ENCODE measurements at regions of chr1 and their contacts with region 1.

Region 1: DNA sequence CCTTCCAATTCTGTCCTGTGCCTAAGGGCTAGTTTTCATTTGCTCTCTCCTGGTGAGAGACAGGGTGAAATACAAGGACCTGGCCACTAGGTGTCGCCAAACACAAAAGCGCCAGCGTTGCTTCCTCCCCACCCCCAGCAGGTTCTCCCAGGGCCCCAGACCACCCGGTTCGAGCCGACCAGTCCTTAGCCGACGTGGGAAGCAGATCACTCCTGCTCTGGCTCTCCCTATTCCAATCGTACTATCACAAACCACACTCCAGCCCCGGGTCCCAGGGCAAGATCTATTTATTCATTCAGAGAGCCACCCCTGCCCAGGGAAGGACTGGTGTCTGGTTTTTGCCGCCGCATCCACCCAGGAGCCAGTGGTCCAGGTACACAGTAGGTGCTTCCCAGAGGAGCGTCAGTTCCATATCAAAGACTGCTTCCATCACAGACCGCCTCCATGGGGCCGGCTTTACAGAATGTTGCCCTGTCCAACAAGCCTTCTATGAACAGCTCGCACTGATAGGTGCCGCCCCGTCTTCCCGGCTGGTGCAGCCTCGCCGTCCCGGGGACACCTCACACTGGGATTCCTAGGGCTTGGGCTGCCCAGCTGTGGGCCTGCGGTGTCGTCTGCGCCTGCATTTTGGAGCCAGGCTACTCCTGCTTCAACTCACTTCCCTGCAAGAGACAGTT is 35.0 kb downstream of the CTNNBIP1 start:
- DNase-seq: peak; percentile 66 to 81 (median 73)
- ATAC-seq: peak; percentile 76 to 89 (median 82)
- H3K4me3 ChIP-seq: peak overlapping the region in 4 of 12 donors; percentile 19 to 28 (median 25)
- H3K27ac ChIP-seq: peak overlapping the region; percentile 4 to 71 (median 33)
- H3K4me1 ChIP-seq: peaks cover 0 to 43% (median 23%) of the 10 kb centered on the region in 12 donors
- H3K27me3 ChIP-seq: no peaks in the 10 kb centered on the region
- CTCF ChIP-seq: peak; percentile 88 to 98 (median 96)
- POLR2A ChIP-seq: no peak

Region 2: DNA sequence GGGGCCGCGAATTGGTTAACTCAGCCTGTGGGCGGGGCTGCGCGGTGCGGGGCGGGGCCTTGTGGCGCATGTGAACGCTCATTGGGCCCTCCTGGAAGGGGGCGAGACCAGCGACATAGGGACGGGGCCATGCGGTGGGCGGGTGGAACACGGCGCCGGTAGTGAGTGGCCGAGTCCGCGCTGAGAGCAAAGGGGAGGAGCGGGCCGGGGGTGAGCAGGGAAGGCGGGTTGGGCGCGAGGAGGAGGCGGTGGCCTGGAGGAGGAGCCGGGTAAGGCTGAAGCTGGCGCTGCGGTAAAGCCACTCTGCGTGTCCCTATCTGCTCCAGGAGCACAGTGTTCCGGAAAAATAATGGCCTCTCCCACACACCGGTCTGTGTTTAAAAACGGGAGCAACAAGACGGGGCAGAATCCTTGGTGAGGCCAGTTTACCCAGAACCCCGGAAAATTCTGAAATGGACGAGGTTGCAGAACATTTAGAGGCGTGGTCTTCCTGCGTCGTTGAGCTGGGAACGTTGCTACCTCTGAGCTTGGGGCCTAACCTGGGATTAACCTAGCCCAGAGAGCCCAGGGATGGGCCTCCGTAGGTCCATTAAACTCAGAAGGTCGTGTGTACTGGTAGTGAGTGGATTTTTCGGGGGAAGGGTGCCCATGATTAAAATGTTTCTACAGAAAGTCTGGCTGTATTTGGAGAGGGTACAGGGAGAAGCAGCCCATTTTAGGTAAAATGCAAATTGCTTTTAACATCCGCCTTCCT is 35.5 kb after region 1 on chr1:
- intact Hi-C with region 1: loop called (anchors 1 to 5 kb)
- DNase-seq: peak; percentile 100
- ATAC-seq: peak; percentile 97 to 99 (median 98)
- H3K4me3 ChIP-seq: peak overlapping the region in 11 of 12 donors; percentile 47 to 85 (median 62)
- H3K27ac ChIP-seq: peak overlapping the region; percentile 86 to 98 (median 92)
- H3K4me1 ChIP-seq: peaks cover 0 to 56% (median 27%) of the 10 kb centered on the region in 12 donors
- H3K27me3 ChIP-seq: no peaks in the 10 kb centered on the region
- CTCF ChIP-seq: no peak
- POLR2A ChIP-seq: peak in 1 of 2 donors; percentile 90

Region 3: GRCh38 chr1:9929431-9930385 is 54.6 kb after region 1 on chr1:
- intact Hi-C with region 1: loop called in 1 of 10 experiments (anchors 10 kb)
- DNase-seq: no peak
- ATAC-seq: peak in 1 of 4 donors; percentile 78
- H3K4me3 ChIP-seq: no peak overlapping the region
- H3K27ac ChIP-seq: peak overlapping the region in 7 of 12 donors; percentile 6 to 50 (median 14)
- H3K4me1 ChIP-seq: peaks cover 0 to 5% (median 0%) of the 10 kb centered on the region in 12 donors
- H3K27me3 ChIP-seq: no peaks in the 10 kb centered on the region
- CTCF ChIP-seq: no peak
- POLR2A ChIP-seq: no peak

Region 4: GRCh38 chr1:9942939-9943788 is 68.1 kb after region 1 on chr1 and contains the starts of genes LZIC and NMNAT1:
- intact Hi-C with region 1: loop called in 4 of 10 experiments (anchors 1 to 10 kb)
- DNase-seq: peak; percentile 93 to 96 (median 94)
- ATAC-seq: peak; percentile 99 to 100 (median 99)
- H3K4me3 ChIP-seq: peak within 1 kb of the TSS; percentile 66 to 96 (median 80)
- H3K27ac ChIP-seq: peak within 1 kb of the TSS; percentile 56 to 94 (median 90)
- H3K4me1 ChIP-seq: peaks cover 4 to 30% (median 17%) of the 10 kb centered on the region in 12 donors
- H3K27me3 ChIP-seq: no peaks in the 10 kb centered on the region
- CTCF ChIP-seq: peak in 2 of 12 donors; percentile 3 to 8
- POLR2A ChIP-seq: peak; percentile 17 to 92
- total RNA-seq, gene LZIC: 30.8 to 37.7 (median 34.9) TPM
- total RNA-seq, gene NMNAT1: 11.0 to 24.2 (median 17.2) TPM

Region 5: GRCh38 chr1:10022656-10023055 is 147.6 kb after region 1 on chr1:
- intact Hi-C with region 1: loop called in 1 of 10 experiments (anchors 10 kb)
- DNase-seq: no peak
- ATAC-seq: no peak
- H3K4me3 ChIP-seq: no peak overlapping the region
- H3K27ac ChIP-seq: no peak overlapping the region
- H3K4me1 ChIP-seq: no peaks in the 10 kb centered on the region
- H3K27me3 ChIP-seq: no peaks in the 10 kb centered on the region
- CTCF ChIP-seq: no peak
- POLR2A ChIP-seq: no peak

Region 6: DNA sequence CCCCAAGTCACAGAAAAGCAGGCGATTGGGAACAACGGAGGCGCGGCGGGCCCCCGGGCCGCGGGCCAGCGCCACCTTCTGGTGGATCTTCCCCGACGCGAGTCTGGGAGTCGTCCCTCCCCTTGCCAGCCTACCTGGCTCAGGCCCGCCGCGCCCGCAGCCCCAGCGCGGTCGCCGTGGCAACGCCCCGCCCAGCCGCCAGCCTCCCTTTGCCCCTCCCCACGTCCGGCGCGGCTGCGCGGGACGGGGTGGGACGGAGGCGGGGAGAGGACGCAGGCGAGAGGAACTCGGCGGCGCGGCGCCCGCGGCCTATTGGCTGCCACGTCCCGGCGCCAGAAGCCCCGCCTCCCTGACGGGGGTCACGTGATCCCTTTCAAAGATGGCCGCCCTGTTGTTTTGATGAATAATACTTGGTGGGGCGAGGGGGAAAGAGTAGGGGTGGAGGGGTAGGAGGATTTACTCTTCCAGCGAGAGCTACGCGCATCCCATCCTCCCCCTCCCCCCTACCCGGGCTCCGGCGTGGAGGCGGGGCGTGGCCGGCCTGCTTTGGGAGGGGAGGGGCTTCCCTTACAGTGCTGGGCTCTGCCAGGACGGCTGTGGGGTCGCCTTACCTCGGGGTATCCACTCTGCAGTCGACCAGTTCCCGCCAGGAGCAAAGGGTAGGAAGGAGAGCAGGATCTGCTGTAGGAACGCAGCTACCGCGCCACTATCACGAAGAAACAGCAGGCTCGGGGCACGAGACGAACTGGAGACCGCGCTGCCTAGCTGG is 157.7 kb after region 1 on chr1 and contains the start of gene UBE4B:
- intact Hi-C with region 1: loop called in 8 of 10 experiments (anchors 2 to 10 kb)
- DNase-seq: peak; percentile 97 to 99 (median 98)
- ATAC-seq: peak; percentile 99 to 100 (median 99)
- H3K4me3 ChIP-seq: peak within 1 kb of the TSS; percentile 73 to 100 (median 90)
- H3K27ac ChIP-seq: peak within 1 kb of the TSS; percentile 65 to 99 (median 95)
- H3K4me1 ChIP-seq: peaks cover 0 to 38% (median 19%) of the 10 kb centered on the region in 12 donors
- H3K27me3 ChIP-seq: no peaks in the 10 kb centered on the region
- CTCF ChIP-seq: peak; percentile 73 to 95 (median 90)
- POLR2A ChIP-seq: peak in 1 of 2 donors; percentile 34
- total RNA-seq, gene UBE4B: 50.4 to 132 (median 68.2) TPM

Region 7: GRCh38 chr1:10082785-10083479 is 207.8 kb after region 1 on chr1:
- intact Hi-C with region 1: no loop called
- DNase-seq: no peak
- ATAC-seq: no peak
- H3K4me3 ChIP-seq: no peak overlapping the region
- H3K27ac ChIP-seq: no peak overlapping the region
- H3K4me1 ChIP-seq: peaks cover 0 to 22% (median 4%) of the 10 kb centered on the region in 12 donors
- H3K27me3 ChIP-seq: no peaks in the 10 kb centered on the region
- CTCF ChIP-seq: no peak
- POLR2A ChIP-seq: no peak